Common myeloid progenitor, CD34-positive (primary cell): ENCODE measurements at regions of chr22 and their contacts with region 1.

Region 1: DNA sequence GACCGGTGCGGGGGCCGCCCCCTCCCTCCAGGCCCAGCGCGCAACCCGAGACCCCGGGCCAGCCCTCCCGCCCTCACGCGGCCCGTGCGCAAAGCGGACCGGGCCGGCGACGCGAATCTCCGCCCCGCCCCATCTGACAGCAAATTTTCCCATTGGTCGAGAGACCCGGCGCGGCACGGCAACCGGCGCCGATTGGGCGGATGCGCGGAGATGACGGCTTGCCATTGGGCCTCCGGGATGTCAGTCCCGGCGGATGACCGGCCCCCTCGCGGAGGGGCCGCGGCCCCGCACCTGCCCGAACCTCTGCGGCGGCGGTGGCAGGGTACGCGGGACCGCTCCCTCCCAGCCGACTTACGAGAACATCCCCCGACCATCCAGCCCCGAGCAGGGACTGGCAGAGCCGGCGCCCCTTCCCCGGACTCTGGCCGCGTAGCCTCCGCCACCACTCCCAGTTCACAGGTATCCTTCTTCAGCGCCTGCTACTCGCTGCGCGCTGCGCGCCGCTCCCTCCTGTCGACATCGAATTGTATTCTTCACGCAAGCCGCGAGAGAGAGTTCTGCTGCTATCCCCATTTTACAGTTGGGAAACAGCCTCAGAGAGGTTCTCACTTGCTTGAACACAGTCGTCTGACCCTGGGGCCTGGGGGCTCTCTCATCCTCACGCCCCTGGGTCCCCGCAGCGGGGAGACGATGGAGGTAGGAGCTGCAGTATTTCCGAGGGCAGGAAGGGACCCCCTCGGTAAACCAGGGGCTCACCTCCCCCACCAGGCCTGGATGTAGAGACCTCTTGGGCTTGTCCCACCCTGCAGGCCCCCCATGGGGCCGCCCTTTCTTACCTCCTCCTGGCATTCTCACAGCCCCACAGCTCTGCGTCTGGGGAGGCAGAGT is at the start of gene ARVCF:
- DNase-seq: peak; percentile 91 to 93 (median 92)
- H3K4me3 ChIP-seq: peak within 1 kb of the TSS; percentile 47 to 85 (median 68)
- H3K27ac ChIP-seq: peak within 1 kb of the TSS in 1 of 2 experiments; percentile 49
- H3K4me1 ChIP-seq: peaks cover 4 to 45% (median 39%) of the 10 kb centered on the region in 4 experiments
- H3K27me3 ChIP-seq: peaks cover 0 to 36% (median 17%) of the 10 kb centered on the region in 5 experiments

Region 2: DNA sequence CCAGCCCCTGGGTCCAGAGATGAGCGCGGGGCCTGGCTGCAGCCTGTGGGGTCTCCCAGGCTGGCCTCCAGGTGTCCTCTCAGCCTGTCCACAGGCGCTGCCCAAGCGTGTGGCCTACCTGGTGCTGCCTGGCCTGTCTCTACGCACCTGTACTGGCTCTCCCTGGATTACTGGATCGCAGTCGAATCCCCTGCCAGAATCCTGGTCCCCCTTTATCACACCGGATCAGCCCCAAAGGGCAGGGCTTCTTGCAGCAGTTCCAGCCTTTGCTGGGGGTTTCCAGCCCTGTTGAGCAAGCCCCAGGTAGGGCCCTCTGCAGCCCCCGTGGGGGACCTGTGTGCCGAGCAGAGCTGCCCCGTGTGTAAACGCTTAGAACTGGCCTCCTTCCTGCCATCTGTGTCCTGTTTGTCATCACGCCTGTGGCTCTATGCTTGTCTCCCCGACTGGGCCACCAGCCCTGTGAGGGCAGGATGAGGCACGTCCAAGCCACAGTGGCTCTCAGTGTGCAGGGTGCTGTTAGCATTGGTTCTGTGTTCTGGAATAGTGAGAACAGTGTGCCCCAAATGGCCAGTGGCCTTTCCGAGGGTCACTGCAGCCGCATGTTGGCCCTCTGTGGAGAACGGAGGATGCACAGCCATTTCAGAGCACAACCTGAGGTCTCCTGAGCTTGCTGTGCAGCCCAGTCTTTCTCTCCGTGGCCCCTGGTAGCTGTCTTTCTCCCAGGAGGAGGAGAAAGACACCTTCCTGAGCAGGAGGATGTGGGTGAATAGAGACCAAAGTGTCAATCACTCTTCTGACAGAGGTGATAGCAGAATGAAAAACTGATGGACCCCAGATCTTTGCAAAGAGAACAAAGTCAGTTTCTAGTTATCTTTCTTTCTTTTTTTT is 61.5 kb before region 1 on chr22:
- CTCF ChIA-PET with region 1: interaction called, 15 read pairs
- POLR2A ChIA-PET with region 1: interaction called, 3 read pairs
- DNase-seq: peak; percentile 57 to 98 (median 96)
- H3K4me3 ChIP-seq: peak overlapping the region in 2 of 7 experiments; percentile 45 to 46
- H3K27ac ChIP-seq: peak overlapping the region; percentile 37 to 72
- H3K4me1 ChIP-seq: peaks cover 0 to 45% (median 25%) of the 10 kb centered on the region in 4 experiments
- H3K27me3 ChIP-seq: no peaks in the 10 kb centered on the region

Region 3: GRCh38 chr22:19970479-19971275 is 46.3 kb before region 1 on chr22:
- CTCF ChIA-PET with region 1: interaction called, 384 read pairs
- POLR2A ChIA-PET with region 1: interaction called, 33 read pairs
- DNase-seq: peak; percentile 66 to 86 (median 81)
- H3K4me3 ChIP-seq: no peak overlapping the region
- H3K27ac ChIP-seq: no peak overlapping the region
- H3K4me1 ChIP-seq: peaks cover 0 to 51% (median 40%) of the 10 kb centered on the region in 4 experiments
- H3K27me3 ChIP-seq: no peaks in the 10 kb centered on the region

Region 4: GRCh38 chr22:19986410-19987341 is 30.3 kb before region 1 on chr22:
- CTCF ChIA-PET with region 1: interaction called, 26 read pairs
- POLR2A ChIA-PET with region 1: interaction called, 3 read pairs
- DNase-seq: peak; percentile 42 to 70 (median 66)
- H3K4me3 ChIP-seq: peak overlapping the region; percentile 34 to 84 (median 76)
- H3K27ac ChIP-seq: peak overlapping the region in 1 of 2 experiments; percentile 63
- H3K4me1 ChIP-seq: peaks cover 0 to 36% (median 20%) of the 10 kb centered on the region in 4 experiments
- H3K27me3 ChIP-seq: no peaks in the 10 kb centered on the region

Region 5: DNA sequence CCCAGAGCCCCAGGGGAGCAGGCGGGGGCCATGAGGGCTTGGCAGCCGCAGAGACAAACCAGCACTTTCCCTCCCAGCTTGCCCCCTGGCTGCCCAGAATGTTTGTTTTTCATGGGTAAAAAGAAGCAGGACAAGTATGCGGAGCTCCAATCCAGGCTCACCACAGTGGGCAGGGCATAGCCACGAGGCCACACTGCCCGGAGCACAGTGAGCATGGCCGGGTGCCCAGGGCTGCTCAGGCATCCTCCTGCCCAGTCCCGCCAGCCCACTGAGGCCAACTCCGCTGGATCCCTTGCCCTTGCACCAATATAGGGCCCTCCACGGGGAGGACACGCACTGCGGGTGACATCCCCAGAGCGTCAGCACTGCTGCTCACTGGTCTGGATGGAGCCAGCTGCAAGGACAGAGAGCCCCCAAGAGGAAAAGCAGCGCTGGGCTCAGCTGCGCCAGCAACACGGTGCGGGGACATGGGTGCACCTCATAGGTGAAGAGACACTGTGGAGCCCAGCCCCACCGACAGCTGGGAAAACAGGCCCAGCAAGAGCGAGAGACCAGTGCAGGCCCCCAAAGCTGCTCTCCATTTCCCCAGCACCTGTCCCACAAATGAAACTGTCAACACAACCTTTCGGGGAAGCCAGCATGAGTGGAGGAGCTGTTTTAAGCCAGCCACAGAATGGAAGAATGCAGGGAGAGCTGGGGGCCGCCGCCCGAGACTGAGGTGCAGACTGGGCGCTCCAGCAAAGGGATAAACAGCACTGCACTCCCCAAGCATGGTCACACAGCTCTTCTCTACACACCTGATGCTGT is 25.1 kb before region 1 on chr22:
- CTCF ChIA-PET with region 1: interaction called, 26 read pairs
- POLR2A ChIA-PET with region 1: interaction called, 3 read pairs
- DNase-seq: no peak
- H3K4me3 ChIP-seq: no peak overlapping the region
- H3K27ac ChIP-seq: no peak overlapping the region
- H3K4me1 ChIP-seq: peaks cover 0 to 6% (median 4%) of the 10 kb centered on the region in 4 experiments
- H3K27me3 ChIP-seq: no peaks in the 10 kb centered on the region

Region 6: DNA sequence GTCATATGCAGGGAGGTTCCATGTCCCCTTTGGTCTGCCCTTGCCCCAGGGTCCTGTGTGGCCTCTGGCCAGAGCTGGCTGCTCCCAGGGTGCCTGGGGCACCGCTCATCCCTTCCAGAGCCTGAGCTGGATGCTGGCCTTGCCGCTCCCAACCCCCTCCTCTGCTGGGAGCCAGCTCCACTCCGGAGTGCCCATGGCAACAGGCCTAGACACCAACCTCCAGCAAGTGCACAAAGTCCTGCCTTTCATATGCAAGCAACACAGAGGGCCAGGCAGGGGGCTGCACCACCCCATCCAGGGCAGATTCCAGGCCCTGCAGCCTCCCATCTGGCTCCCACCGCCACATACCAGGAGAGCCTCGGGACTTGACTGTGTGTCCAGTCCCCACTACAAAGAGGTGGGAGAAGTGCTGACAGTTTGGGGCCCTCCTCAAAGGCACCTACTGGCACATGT is 16.8 kb before region 1 on chr22:
- CTCF ChIA-PET with region 1: interaction called, 13 read pairs
- POLR2A ChIA-PET with region 1: interaction called, 4 read pairs
- DNase-seq: no peak
- H3K4me3 ChIP-seq: no peak overlapping the region
- H3K27ac ChIP-seq: no peak overlapping the region
- H3K4me1 ChIP-seq: peaks cover 0 to 42% (median 30%) of the 10 kb centered on the region in 4 experiments
- H3K27me3 ChIP-seq: no peaks in the 10 kb centered on the region

Region 7: DNA sequence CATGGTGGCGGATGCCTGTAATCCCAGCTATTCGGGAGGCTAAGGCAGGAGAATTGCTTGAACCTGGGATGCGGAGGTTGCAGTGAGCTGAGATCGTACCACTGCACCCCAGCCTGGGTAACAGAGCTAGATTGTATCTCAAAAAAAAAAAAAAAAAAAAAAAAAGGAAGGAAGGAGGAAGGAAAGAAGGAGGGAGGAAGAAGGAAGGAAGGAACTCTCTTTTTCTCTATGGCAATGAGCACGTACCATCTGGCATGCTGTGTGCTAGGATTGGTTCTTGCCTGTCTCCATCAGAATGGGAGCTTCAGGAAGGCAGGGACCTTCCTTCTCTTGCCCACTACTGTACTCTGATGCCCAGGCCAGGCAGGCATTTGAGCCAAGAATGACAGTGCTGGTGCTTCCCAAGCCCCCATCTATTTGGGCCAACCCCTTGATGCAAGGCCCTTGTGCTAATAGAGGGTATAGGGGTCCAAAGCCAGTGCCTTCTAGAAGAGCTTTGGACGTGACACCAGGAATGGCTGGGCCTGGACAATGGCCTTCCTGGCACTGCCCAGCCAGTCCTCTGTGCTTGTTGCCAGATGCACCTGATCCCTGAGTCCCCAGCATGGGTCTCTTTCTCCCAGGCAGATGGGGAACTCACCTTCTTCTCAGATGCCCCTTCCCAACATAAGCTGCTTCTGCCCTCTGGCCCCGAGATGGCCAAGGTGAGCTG is 52.5 kb after region 1 on chr22:
- CTCF ChIA-PET with region 1: no interaction called
- POLR2A ChIA-PET with region 1: no interaction called
- DNase-seq: no peak
- H3K4me3 ChIP-seq: no peak overlapping the region
- H3K27ac ChIP-seq: no peak overlapping the region
- H3K4me1 ChIP-seq: no peaks in the 10 kb centered on the region
- H3K27me3 ChIP-seq: no peaks in the 10 kb centered on the region

Region 8: DNA sequence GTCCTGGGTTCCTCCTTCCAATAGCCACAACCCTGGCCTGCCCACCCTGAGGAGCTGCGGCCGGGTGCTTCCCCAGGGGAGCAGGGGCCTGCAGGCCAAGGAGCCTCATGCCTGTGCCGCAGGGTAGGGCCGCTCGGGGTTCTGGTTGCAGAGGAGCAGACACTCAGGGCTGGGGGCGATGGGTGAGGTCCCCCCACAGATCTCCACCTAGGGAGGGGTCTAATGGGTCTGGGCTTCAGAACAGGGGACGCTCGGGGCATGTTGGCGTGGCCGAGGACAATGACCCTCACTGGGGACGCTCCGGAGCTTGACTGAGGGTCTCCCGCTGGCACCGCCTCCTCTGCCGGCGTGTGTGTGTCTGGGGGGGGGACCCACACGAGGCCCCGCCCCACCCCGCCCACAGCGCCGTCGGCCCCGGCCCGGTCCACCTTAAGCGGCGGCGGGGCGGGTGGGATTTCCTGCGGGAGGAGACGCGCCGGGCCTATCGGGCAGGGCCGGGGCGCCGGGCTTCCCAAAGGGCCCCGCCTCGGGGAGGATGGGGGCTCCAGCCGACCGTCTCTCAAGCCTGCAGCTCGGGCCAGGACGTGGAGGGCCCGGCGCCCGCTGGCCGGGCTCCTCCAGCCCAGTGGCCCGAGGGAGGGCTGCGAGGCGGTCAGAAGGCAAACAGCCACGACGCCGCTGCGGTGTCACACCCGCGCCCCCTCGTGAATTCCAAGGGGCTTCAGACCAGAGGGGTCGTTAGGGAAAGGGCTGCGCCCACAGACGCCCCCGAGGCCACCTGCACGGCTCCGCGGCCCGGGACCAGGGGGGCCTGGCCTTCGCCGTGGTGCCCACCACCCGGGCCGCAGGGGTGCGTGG is 114.0 kb after region 1 on chr22:
- CTCF ChIA-PET with region 1: interaction called, 12 read pairs
- POLR2A ChIA-PET with region 1: no interaction called
- DNase-seq: peak; percentile 63 to 79 (median 74)
- H3K4me3 ChIP-seq: peak overlapping the region; percentile 70 to 92 (median 79)
- H3K27ac ChIP-seq: peak overlapping the region; percentile 33 to 77
- H3K4me1 ChIP-seq: peaks cover 0 to 38% (median 32%) of the 10 kb centered on the region in 4 experiments
- H3K27me3 ChIP-seq: no peaks in the 10 kb centered on the region